ENCODE measurements at regions of chr10 and their contacts with region 1.

Region 1: DNA sequence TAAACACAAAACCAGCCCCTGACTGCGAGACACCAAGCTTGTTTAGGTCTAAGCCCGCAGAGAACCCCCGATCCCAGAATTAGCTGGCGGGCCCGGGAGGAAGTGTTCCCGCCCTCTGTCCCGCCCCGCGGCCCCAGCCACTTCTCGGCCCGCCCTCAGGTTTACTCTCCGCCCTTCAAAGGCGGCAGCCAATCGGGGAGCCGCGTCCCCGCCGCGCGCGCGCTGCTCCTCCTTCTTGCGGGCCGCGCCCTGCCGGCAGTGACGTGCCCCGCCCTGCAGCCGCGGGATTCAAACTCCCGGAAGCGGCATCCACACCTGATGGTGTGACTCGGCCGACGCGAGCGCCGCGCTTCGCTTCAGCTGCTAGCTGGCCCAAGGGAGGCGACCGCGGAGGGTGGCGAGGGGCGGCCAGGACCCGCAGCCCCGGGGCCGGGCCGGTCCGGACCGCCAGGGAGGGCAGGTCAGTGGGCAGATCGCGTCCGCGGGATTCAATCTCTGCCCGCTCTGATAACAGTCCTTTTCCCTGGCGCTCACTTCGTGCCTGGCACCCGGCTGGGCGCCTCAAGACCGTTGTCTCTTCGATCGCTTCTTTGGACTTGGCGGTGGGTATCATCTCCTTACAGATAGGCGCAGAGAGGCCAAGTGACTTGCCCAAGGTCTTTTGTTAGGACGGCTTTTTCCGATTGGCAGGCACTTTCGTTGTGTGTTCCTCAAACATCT is at the start of gene CEP55:
- DNase-seq: peak; percentile 77
- H3K4me3 ChIP-seq: peak within 1 kb of the TSS; percentile 50
- H3K27me3 ChIP-seq: no peaks in the 10 kb centered on the region
- CTCF ChIP-seq: no peak
- polyA plus RNA-seq, gene CEP55: 16.8 and 28.2 TPM in 2 replicates

Region 2: DNA sequence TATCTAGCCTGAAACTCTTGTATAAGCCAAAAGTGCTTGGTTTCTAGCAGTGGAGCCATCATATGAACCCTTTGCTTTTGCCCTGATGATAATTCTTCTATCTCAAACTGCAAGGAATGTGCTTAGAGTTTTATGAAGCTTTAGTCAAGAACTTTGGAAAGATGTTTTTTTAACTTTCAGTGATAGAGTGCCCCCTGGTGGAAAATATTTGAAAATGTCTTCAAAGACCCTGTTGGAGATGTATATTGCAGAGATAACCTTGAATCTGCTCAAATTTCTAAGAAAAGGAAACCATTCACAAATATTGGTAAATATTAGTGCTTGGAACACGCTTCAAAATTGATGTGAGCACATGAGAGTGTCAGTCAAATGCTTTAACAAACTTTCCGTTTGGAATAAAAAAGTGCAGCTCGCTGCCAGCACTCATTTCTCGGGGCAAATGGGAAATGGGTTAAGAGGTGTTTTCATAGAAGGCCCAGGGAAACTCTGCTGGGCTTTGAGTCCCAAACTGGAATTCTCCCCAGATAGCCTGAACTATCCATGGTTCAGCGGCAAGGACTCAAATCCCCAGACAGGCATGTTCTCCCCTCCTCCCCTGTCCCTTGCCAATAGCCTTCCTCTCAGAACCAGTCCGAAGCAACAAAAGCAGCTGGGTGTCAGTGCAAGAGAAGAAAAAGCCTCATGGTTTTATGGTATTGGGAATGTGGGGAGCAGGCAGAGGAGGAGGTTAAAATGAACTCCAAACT is 143.7 kb before region 1 on chr10:
- CTCF ChIA-PET with region 1: interaction called, 15 read pairs
- POLR2A ChIA-PET with region 1: no interaction called
- DNase-seq: no peak
- H3K4me3 ChIP-seq: no peak overlapping the region
- H3K27me3 ChIP-seq: no peaks in the 10 kb centered on the region
- CTCF ChIP-seq: peak; percentile 55

Region 3: GRCh38 chr10:95278061-95278988 is 1781.8 kb after region 1 on chr10:
- CTCF ChIA-PET with region 1: no interaction called
- POLR2A ChIA-PET with region 1: interaction called, 11 read pairs
- DNase-seq: no peak
- H3K4me3 ChIP-seq: no peak overlapping the region
- H3K27me3 ChIP-seq: no peaks in the 10 kb centered on the region
- CTCF ChIP-seq: no peak

Measured in BJ (cell line).